Right cardiac atrium (tissue), 5 donors: ENCODE measurements at regions of chr4 and their contacts with region 1.

Region 1: DNA sequence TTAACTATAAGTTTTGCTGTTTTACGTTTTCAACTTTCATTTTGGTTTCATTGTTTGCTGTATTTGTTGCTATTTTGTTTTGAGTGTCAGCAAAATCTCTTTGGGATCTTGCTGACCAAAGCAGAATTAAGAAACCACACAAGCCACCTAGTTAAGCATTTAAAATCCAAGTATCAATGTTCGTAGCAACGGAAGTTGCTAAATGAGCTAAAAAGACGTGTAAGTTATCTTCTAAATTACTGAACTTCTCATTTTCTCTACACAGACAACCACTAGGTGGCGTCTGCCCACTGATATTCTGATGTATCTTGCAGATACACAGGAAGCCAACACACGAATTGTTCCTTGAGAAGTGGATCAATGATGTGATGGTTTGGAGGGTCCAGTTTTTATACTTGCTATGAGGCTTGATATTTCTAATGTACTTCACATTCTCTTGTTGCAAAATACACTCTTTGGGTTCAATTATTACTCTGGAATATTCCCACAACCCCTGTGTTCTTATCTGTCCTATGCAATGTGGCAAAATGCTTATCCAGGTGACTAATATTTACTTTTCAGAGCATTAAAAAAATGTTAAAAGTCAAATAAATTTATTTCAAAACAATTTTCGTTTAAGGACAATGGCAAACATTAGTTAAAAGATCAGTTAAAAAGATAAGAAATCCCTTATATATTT is 250.5 kb downstream of the TECRL start:
- DNase-seq: peak in 2 of 3 donors; percentile 20 to 53
- ATAC-seq: no peak
- H3K4me3 ChIP-seq: peak overlapping the region; percentile 54
- H3K27ac ChIP-seq: no peak overlapping the region
- H3K4me1 ChIP-seq: no peaks in the 10 kb centered on the region
- H3K27me3 ChIP-seq: no peaks in the 10 kb centered on the region

Region 2: GRCh38 chr4:64533637-64534036 is 374.9 kb after region 1 on chr4:
- intact Hi-C with region 1: loop called in 1 of 4 experiments (anchors 5 kb)
- DNase-seq: no peak
- ATAC-seq: no peak
- H3K4me3 ChIP-seq: peak overlapping the region; percentile 28
- H3K27ac ChIP-seq: no peak overlapping the region
- H3K4me1 ChIP-seq: no peaks in the 10 kb centered on the region
- H3K27me3 ChIP-seq: no peaks in the 10 kb centered on the region

Region 3: GRCh38 chr4:64539234-64539849 is 380.6 kb after region 1 on chr4:
- intact Hi-C with region 1: loop called in 2 of 4 experiments (anchors 5 kb)
- DNase-seq: peak in 1 of 3 donors; percentile 19
- ATAC-seq: peak; percentile 75 to 77
- H3K4me3 ChIP-seq: no peak overlapping the region
- H3K27ac ChIP-seq: no peak overlapping the region
- H3K4me1 ChIP-seq: no peaks in the 10 kb centered on the region
- H3K27me3 ChIP-seq: no peaks in the 10 kb centered on the region